GM12878 (cell line): ENCODE measurements at regions of chr2 and their contacts with region 1.

Region 1: DNA sequence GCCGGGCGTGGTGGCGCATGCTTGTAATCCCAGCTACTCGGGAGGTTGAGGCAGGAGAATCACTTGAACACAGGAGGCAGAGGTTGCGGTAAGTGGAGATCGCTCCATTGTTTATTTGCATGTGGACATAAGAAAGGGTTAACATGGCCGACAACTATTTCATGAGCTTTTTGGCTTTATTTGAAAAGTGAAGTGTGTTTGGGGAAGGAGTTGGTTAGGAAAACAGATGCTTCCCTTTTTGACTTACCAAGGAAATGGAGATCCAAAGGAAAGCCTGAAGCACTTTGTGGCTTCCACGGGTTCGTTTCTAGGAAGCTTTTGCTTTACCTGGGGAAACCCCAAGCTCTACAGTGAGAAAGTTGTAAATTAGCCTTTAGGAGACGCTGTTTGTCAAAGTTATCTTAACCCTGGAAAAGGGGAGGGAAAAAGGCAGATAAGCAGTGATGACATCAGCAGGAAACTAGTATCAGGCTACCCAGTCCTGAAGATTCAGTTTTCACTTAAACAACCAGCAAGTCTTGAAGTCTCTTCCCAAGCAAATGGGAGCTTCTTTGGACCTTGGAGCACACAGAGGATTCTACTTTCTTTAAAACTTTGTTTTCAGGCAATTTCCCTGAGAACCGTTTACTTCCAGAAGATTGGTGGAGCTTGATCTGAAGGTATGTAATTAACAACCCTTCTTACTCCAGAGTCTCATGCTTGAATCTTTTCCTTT is at the start of gene CASP10:
- DNase-seq: peak; percentile 77
- ATAC-seq: peak; percentile 80
- H3K4me3 ChIP-seq: peak within 1 kb of the TSS; percentile 70
- H3K27ac ChIP-seq: peak within 1 kb of the TSS; percentile 1; the same call in 1 of the 2 replicates
- H3K4me1 ChIP-seq: no peaks in the 10 kb centered on the region
- H3K27me3 ChIP-seq: no peaks in the 10 kb centered on the region; a peak in 2 of 4 replicates
- CTCF ChIP-seq: peak; percentile 65 to 92 (median 76); a peak in 4 of 6 replicates
- EP300 ChIP-seq: no peak
- POLR2A ChIP-seq: no peak
- RAD21 ChIP-seq: peak; percentile 87
- polyA plus RNA-seq, gene CASP10: 7.5 to 9.5 TPM

Region 2: DNA sequence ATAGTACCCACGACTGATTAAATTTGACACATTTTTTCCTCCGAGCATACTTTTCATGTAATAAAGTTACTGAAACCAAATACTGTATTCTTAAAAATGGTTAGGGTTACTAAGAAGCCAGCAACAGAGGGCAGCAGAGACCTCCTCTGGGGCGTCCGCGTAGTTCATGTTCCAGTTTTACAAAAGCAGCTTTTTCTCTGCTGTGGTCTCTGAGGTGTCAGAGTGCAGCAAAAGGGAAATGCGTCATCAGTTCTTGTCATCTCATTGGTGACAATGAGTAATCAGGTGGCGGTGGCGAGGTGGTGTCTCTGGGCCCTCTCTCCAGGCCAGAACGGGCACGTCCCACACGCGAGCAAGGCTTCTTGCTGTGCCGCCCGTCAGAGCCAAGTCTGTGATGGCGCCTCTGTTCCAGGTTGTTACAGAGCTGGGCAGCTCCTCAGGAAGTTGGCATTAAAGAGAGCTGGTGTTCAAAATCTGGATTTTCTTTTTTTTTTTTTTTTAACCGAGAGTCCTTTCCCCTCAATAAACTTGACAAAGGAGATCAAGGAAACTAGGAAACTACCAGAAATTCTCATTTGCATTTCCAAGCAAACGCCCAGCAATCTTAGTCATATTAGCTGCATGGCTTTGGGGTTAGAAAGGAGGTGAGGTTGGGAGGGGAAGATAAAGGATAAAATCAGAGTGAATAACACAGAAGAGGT is 469.7 kb before region 1 on chr2:
- CTCF ChIA-PET with region 1: interaction called, 31 read pairs
- POLR2A ChIA-PET with region 1: interaction called, 6 read pairs
- RAD21 ChIA-PET with region 1: interaction called, 4 read pairs
- SMC1A ChIA-PET with region 1: interaction called, 9 read pairs
- in situ Hi-C with region 1: no loop called
- intact Hi-C with region 1: no loop called
- DNase-seq: peak; percentile 98
- ATAC-seq: peak; percentile 99
- H3K4me3 ChIP-seq: no peak overlapping the region
- H3K27ac ChIP-seq: peak overlapping the region; percentile 82
- H3K4me1 ChIP-seq: peaks cover 7% of the 10 kb centered on the region
- H3K27me3 ChIP-seq: no peaks in the 10 kb centered on the region
- CTCF ChIP-seq: peak; percentile 75 to 94 (median 80)
- EP300 ChIP-seq: peak; percentile 85 to 94; a peak in 3 of 4 replicates
- POLR2A ChIP-seq: peak; percentile 98
- RAD21 ChIP-seq: peak; percentile 95

Region 3: GRCh38 chr2:200901459-200902072 is 281.2 kb before region 1 on chr2:
- CTCF ChIA-PET with region 1: interaction called, 81 read pairs
- POLR2A ChIA-PET with region 1: interaction called, 4 read pairs
- RAD21 ChIA-PET with region 1: interaction called, 57 read pairs
- SMC1A ChIA-PET with region 1: interaction called, 38 read pairs
- in situ Hi-C with region 1: loop called (anchors 5 kb)
- intact Hi-C with region 1: no loop called
- DNase-seq: peak; percentile 72
- ATAC-seq: peak; percentile 99
- H3K4me3 ChIP-seq: no peak overlapping the region
- H3K27ac ChIP-seq: no peak overlapping the region
- H3K4me1 ChIP-seq: no peaks in the 10 kb centered on the region
- H3K27me3 ChIP-seq: no peaks in the 10 kb centered on the region
- CTCF ChIP-seq: peak; percentile 71 to 90 (median 87); a peak in 5 of 6 replicates
- EP300 ChIP-seq: no peak
- POLR2A ChIP-seq: no peak
- RAD21 ChIP-seq: peak; percentile 76

Region 4: GRCh38 chr2:201118121-201118960 is 64.5 kb before region 1 on chr2:
- CTCF ChIA-PET with region 1: interaction called, 17 read pairs
- POLR2A ChIA-PET with region 1: interaction called, 3 read pairs
- RAD21 ChIA-PET with region 1: interaction called, 17 read pairs
- SMC1A ChIA-PET with region 1: interaction called, 11 read pairs
- in situ Hi-C with region 1: no loop called
- intact Hi-C with region 1: loop called (anchors 5 kb)
- DNase-seq: no peak
- ATAC-seq: peak; percentile 61
- H3K4me3 ChIP-seq: peak overlapping the region; percentile 82
- H3K27ac ChIP-seq: peak overlapping the region; percentile 99
- H3K4me1 ChIP-seq: peaks cover 16% of the 10 kb centered on the region
- H3K27me3 ChIP-seq: no peaks in the 10 kb centered on the region
- CTCF ChIP-seq: peak; percentile 37 to 65 (median 42)
- EP300 ChIP-seq: peak; percentile 88 to 89; a peak in 3 of 4 replicates
- POLR2A ChIP-seq: peak; percentile 83
- RAD21 ChIP-seq: peak; percentile 66

Region 5: DNA sequence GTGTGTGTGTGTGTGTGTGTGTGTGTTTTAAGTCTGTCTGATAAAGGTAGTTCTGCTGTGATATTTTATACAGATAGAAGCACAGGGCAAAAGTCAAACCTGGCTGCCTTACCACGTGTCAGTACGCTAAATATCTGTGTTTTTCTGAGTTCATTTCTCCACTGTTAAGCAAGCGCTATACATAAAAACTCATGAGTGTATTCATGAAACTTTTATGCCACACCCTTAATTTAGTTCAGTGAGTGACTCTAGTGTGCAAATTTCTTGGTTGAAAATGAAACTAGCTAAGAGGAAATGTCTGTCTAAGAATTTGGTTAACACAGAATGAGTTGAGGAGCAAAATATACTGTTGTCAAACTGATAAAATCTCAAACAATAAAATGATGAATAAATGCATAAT is 11.3 kb after region 1 on chr2:
- CTCF ChIA-PET with region 1: interaction called, 35 read pairs
- POLR2A ChIA-PET with region 1: interaction called, 8 read pairs
- RAD21 ChIA-PET with region 1: interaction called, 21 read pairs
- SMC1A ChIA-PET with region 1: interaction called, 37 read pairs
- in situ Hi-C with region 1: no loop called
- intact Hi-C with region 1: no loop called
- DNase-seq: peak; percentile 55
- ATAC-seq: peak; percentile 98
- H3K4me3 ChIP-seq: no peak overlapping the region
- H3K27ac ChIP-seq: no peak overlapping the region
- H3K4me1 ChIP-seq: peaks cover 12% of the 10 kb centered on the region; the same call in 1 of the 2 replicates
- H3K27me3 ChIP-seq: no peaks in the 10 kb centered on the region
- CTCF ChIP-seq: no peak
- EP300 ChIP-seq: peak; percentile 29 to 57; a peak in 2 of 4 replicates
- POLR2A ChIP-seq: no peak
- RAD21 ChIP-seq: no peak

Region 6: GRCh38 chr2:201220102-201220570 is 37.3 kb after region 1 on chr2:
- CTCF ChIA-PET with region 1: interaction called, 18 read pairs
- POLR2A ChIA-PET with region 1: interaction called, 5 read pairs
- RAD21 ChIA-PET with region 1: interaction called, 7 read pairs
- SMC1A ChIA-PET with region 1: interaction called, 11 read pairs
- in situ Hi-C with region 1: loop called (anchors 5 kb)
- intact Hi-C with region 1: no loop called
- DNase-seq: no peak
- ATAC-seq: no peak
- H3K4me3 ChIP-seq: no peak overlapping the region
- H3K27ac ChIP-seq: no peak overlapping the region
- H3K4me1 ChIP-seq: peaks cover 6% of the 10 kb centered on the region
- H3K27me3 ChIP-seq: no peaks in the 10 kb centered on the region; a peak in 1 of 4 replicates
- CTCF ChIP-seq: no peak
- EP300 ChIP-seq: no peak
- POLR2A ChIP-seq: no peak
- RAD21 ChIP-seq: no peak

Region 7: GRCh38 chr2:201363857-201364560 is 181.2 kb after region 1 on chr2:
- CTCF ChIA-PET with region 1: interaction called, 20 read pairs
- POLR2A ChIA-PET with region 1: interaction called, 3 read pairs
- RAD21 ChIA-PET with region 1: interaction called, 5 read pairs
- SMC1A ChIA-PET with region 1: interaction called, 19 read pairs
- in situ Hi-C with region 1: loop called (anchors 5 kb)
- intact Hi-C with region 1: loop called (anchors 1 kb)
- DNase-seq: peak; percentile 30
- ATAC-seq: peak; percentile 94
- H3K4me3 ChIP-seq: no peak overlapping the region
- H3K27ac ChIP-seq: no peak overlapping the region
- H3K4me1 ChIP-seq: no peaks in the 10 kb centered on the region
- H3K27me3 ChIP-seq: no peaks in the 10 kb centered on the region
- CTCF ChIP-seq: peak; percentile 83 to 86 (median 86)
- EP300 ChIP-seq: no peak
- POLR2A ChIP-seq: no peak
- RAD21 ChIP-seq: peak; percentile 97

Region 8: DNA sequence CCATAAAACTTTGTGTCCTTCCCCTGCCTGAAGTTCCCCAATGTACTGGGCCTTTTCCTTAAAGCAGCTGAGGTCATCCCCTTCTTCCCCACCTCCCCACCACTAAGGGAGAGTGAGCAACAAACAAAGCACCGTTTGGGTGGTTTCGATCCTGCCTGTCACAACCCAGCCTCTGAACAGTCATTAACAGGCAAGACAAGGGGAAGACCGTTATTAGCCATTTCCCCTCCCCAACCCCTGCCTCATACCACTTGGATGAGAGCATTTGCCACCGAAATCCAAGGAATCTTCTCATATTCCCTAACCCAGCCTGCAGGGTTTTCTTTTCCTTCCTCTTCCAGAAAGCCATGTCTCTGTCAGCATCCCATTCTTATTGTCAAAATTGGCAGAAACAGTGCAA is 334.3 kb after region 1 on chr2:
- CTCF ChIA-PET with region 1: no interaction called
- POLR2A ChIA-PET with region 1: no interaction called
- RAD21 ChIA-PET with region 1: no interaction called
- SMC1A ChIA-PET with region 1: no interaction called
- in situ Hi-C with region 1: no loop called
- intact Hi-C with region 1: no loop called
- DNase-seq: no peak
- ATAC-seq: no peak
- H3K4me3 ChIP-seq: no peak overlapping the region
- H3K27ac ChIP-seq: no peak overlapping the region
- H3K4me1 ChIP-seq: no peaks in the 10 kb centered on the region
- H3K27me3 ChIP-seq: no peaks in the 10 kb centered on the region
- CTCF ChIP-seq: no peak
- EP300 ChIP-seq: no peak
- POLR2A ChIP-seq: no peak
- RAD21 ChIP-seq: no peak